ENCODE measurements at regions of chr5 and their contacts with region 1.

Region 1: DNA sequence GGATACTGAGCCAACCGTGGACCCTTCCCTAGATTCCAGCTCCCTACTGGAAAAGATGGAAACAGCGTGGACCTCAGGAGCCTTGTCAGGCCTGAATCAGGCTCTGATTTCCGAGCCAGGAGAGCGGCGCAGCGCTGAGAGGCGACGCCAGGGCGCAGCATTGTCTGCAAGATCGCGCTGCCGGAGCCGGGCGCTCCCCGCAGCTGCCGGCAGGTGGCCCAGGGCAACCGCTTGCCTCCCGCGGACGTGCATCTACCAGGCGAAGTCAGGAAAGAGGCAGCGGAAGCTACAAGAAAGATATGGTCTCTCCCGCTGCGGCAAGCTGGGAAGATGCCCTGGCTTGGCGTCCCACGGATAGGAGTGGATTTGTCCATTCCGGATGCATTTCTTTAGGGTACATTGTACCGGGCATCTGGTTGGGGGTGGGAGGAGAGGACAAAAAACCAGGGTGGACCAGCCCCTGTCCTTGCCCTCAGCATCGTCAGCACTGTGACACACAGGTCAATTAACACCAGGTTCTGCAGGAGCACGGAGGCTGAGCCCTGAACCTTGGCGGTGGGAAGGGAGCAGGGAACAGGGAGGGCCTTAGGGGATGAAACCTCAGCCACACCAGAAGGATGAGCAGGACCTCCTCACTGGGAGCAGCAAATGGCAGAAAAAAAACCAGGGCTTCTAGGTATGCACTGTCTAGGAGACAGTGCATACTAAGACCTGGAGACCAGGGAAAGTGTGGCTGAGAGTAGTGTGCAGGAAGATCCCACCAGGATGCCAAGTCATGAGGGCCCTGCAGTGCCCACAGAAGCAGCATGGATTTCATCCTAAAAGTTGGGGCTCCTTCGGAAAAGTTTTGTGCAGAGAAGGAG is 55.9 kb downstream of the SFXN1 start:
- DNase-seq: peak; percentile 67 to 91 (median 79)
- ATAC-seq: peak; percentile 99
- H3K4me3 ChIP-seq: peak overlapping the region in 1 of 2 experiments; percentile 11
- H3K4me3 Mint-ChIP-seq: peak overlapping the region; percentile 69
- H3K27ac ChIP-seq: no peak overlapping the region
- H3K27ac Mint-ChIP-seq: no peak overlapping the region
- H3K4me1 ChIP-seq: peaks cover 16% of the 10 kb centered on the region
- H3K4me1 Mint-ChIP-seq: peaks cover 27% of the 10 kb centered on the region
- H3K27me3 ChIP-seq: no peaks in the 10 kb centered on the region
- H3K27me3 Mint-ChIP-seq: no peaks in the 10 kb centered on the region
- CTCF ChIP-seq: peak; percentile 100

Region 2: GRCh38 chr5:173736923-173737412 is 1797.3 kb before region 1 on chr5:
- CTCF ChIA-PET with region 1: no interaction called
- POLR2A ChIA-PET with region 1: no interaction called
- intact Hi-C with region 1: no loop called
- DNase-seq: no peak
- ATAC-seq: no peak
- H3K4me3 ChIP-seq: no peak overlapping the region
- H3K4me3 Mint-ChIP-seq: no peak overlapping the region
- H3K27ac ChIP-seq: no peak overlapping the region
- H3K27ac Mint-ChIP-seq: no peak overlapping the region
- H3K4me1 ChIP-seq: no peaks in the 10 kb centered on the region
- H3K4me1 Mint-ChIP-seq: no peaks in the 10 kb centered on the region
- H3K27me3 ChIP-seq: no peaks in the 10 kb centered on the region
- H3K27me3 Mint-ChIP-seq: peaks cover 2% of the 10 kb centered on the region
- CTCF ChIP-seq: no peak

Region 3: GRCh38 chr5:175363300-175363699 is 171.0 kb before region 1 on chr5:
- CTCF ChIA-PET with region 1: no interaction called
- POLR2A ChIA-PET with region 1: no interaction called
- intact Hi-C with region 1: no loop called
- DNase-seq: no peak
- ATAC-seq: no peak
- H3K4me3 ChIP-seq: no peak overlapping the region
- H3K4me3 Mint-ChIP-seq: no peak overlapping the region
- H3K27ac ChIP-seq: no peak overlapping the region
- H3K27ac Mint-ChIP-seq: no peak overlapping the region
- H3K4me1 ChIP-seq: no peaks in the 10 kb centered on the region
- H3K4me1 Mint-ChIP-seq: no peaks in the 10 kb centered on the region
- H3K27me3 ChIP-seq: no peaks in the 10 kb centered on the region
- H3K27me3 Mint-ChIP-seq: peaks cover 26% of the 10 kb centered on the region
- CTCF ChIP-seq: no peak

Region 4: GRCh38 chr5:175427762-175428161 is 106.5 kb before region 1 on chr5:
- CTCF ChIA-PET with region 1: no interaction called
- POLR2A ChIA-PET with region 1: no interaction called
- intact Hi-C with region 1: no loop called
- DNase-seq: no peak
- ATAC-seq: no peak
- H3K4me3 ChIP-seq: no peak overlapping the region
- H3K4me3 Mint-ChIP-seq: no peak overlapping the region
- H3K27ac ChIP-seq: no peak overlapping the region
- H3K27ac Mint-ChIP-seq: no peak overlapping the region
- H3K4me1 ChIP-seq: no peaks in the 10 kb centered on the region
- H3K4me1 Mint-ChIP-seq: no peaks in the 10 kb centered on the region
- H3K27me3 ChIP-seq: no peaks in the 10 kb centered on the region
- H3K27me3 Mint-ChIP-seq: peaks cover 21% of the 10 kb centered on the region
- CTCF ChIP-seq: no peak

Region 5: DNA sequence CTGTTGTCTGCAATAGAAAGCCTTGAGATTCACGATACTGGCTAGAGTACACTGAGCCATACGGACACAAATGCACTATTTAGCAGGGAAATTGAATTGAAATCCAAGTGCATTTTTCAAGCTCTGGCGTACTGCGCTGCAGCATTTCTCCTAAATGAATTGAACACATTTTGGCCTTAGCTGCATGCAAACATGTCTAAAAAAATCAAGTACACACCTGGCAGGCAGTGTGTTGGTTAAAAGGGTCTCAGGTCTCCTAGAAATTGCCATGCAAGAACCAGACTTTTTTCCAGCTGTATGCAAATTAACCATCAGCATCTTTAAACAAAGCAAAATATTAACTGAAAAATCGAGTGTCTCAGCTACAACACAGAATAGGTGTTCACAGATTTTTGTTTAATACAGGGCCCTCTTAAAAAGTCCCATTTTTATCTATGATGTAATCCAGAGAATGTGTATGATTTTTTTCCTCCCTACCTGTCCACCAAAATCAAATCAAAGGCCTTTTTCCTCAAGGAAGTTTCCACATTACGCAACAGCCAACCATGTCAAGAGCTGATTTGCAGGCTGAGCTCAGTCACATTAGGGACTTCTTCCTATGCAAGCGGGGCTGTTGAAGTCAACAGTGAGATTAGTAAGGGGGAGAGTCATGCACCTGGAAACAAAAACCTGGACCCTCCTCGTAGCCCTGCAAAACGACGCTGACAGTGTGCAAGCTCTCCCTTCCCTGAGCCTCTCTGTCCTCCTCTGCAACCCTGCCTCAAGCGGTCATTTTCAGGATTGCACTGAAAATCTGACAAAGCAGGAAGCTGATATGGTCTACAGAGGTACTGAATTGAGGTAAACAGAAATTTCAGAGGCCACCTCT is 70.0 kb before region 1 on chr5:
- CTCF ChIA-PET with region 1: interaction called, 42 read pairs
- POLR2A ChIA-PET with region 1: interaction called, 4 read pairs
- intact Hi-C with region 1: no loop called
- DNase-seq: peak; percentile 35 to 76 (median 63)
- ATAC-seq: peak; percentile 98
- H3K4me3 ChIP-seq: no peak overlapping the region
- H3K4me3 Mint-ChIP-seq: peak overlapping the region; percentile 5
- H3K27ac ChIP-seq: no peak overlapping the region
- H3K27ac Mint-ChIP-seq: peak overlapping the region; percentile 62
- H3K4me1 ChIP-seq: peaks cover 7% of the 10 kb centered on the region
- H3K4me1 Mint-ChIP-seq: peaks cover 10% of the 10 kb centered on the region
- H3K27me3 ChIP-seq: no peaks in the 10 kb centered on the region
- H3K27me3 Mint-ChIP-seq: no peaks in the 10 kb centered on the region
- CTCF ChIP-seq: peak; percentile 78

Region 6: GRCh38 chr5:175517818-175518450 is 16.4 kb before region 1 on chr5:
- CTCF ChIA-PET with region 1: interaction called, 74 read pairs
- POLR2A ChIA-PET with region 1: no interaction called
- intact Hi-C with region 1: no loop called
- DNase-seq: peak in 8 of 9 experiments; percentile 32 to 70 (median 51)
- ATAC-seq: peak; percentile 13
- H3K4me3 ChIP-seq: no peak overlapping the region
- H3K4me3 Mint-ChIP-seq: peak overlapping the region; percentile 35
- H3K27ac ChIP-seq: peak overlapping the region in 1 of 2 experiments; percentile 5
- H3K27ac Mint-ChIP-seq: peak overlapping the region; percentile 87
- H3K4me1 ChIP-seq: peaks cover 66% of the 10 kb centered on the region
- H3K4me1 Mint-ChIP-seq: peaks cover 75% of the 10 kb centered on the region
- H3K27me3 ChIP-seq: no peaks in the 10 kb centered on the region
- H3K27me3 Mint-ChIP-seq: no peaks in the 10 kb centered on the region
- CTCF ChIP-seq: no peak

Region 7: GRCh38 chr5:175657593-175658271 is 123.4 kb after region 1 on chr5 and contains the start of gene HRH2:
- CTCF ChIA-PET with region 1: interaction called, 36 read pairs
- POLR2A ChIA-PET with region 1: interaction called, 4 read pairs
- intact Hi-C with region 1: loop called (anchors 1 to 2 kb)
- DNase-seq: peak in 7 of 9 experiments; percentile 28 to 61 (median 49)
- ATAC-seq: peak; percentile 43
- H3K4me3 ChIP-seq: peak within 1 kb of the TSS; percentile 63 to 84
- H3K4me3 Mint-ChIP-seq: peak within 1 kb of the TSS; percentile 93
- H3K27ac ChIP-seq: peak within 1 kb of the TSS in 1 of 2 experiments; percentile 31
- H3K27ac Mint-ChIP-seq: peak within 1 kb of the TSS; percentile 76
- H3K4me1 ChIP-seq: peaks cover 68% of the 10 kb centered on the region
- H3K4me1 Mint-ChIP-seq: peaks cover 80% of the 10 kb centered on the region
- H3K27me3 ChIP-seq: peaks cover 0 to 7% of the 10 kb centered on the region in 2 experiments
- H3K27me3 Mint-ChIP-seq: no peaks in the 10 kb centered on the region
- CTCF ChIP-seq: no peak
- total RNA-seq, gene HRH2: 1.4 to 1.6 TPM

Region 8: DNA sequence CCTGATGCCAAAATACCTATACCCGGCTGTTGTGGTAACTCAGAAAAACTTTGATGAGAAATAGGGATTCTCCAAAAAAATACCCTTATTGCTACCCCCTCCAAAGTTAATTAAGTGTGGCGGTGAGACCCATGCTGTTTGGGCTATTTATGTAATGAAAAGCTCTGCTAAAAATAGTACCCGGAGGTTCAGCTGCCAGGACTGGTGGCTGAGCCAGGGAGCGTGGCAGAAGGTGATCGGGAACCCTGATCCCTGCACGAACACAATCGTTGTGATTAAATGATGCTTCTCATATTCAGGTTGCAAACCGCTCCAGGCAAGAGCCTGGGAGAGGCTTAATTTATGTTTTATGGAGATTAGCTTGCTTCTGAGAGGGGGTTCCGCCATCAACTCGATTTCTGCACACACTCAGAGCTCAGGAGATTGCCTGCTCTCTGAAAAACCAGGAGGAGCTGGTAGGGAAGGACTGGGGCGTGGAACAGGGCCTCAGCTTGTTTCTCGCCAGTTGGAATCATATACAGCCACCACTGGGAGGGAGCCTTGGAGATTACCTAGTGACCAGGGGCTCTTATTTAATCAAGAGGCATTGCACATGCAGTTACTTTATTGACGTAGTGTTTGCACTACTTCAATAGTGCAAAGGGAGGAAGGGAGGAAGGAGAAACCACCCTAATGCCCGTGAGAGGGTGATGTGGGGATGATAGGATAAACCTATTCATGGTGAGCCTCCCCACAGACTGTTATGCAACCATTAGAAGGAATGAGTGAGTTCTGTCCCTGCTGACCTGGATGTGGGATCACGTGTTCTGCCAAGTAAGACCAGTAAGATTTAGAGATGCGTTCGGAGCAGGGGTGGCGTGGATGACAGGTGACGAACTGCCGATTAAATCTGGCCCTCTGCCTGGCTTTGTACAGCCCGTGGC is 147.0 kb after region 1 on chr5:
- CTCF ChIA-PET with region 1: interaction called, 14 read pairs
- POLR2A ChIA-PET with region 1: no interaction called
- intact Hi-C with region 1: no loop called
- DNase-seq: no peak
- ATAC-seq: no peak
- H3K4me3 ChIP-seq: no peak overlapping the region
- H3K4me3 Mint-ChIP-seq: no peak overlapping the region
- H3K27ac ChIP-seq: no peak overlapping the region
- H3K27ac Mint-ChIP-seq: no peak overlapping the region
- H3K4me1 ChIP-seq: peaks cover 21% of the 10 kb centered on the region
- H3K4me1 Mint-ChIP-seq: peaks cover 36% of the 10 kb centered on the region
- H3K27me3 ChIP-seq: no peaks in the 10 kb centered on the region
- H3K27me3 Mint-ChIP-seq: no peaks in the 10 kb centered on the region
- CTCF ChIP-seq: no peak

Region 9: DNA sequence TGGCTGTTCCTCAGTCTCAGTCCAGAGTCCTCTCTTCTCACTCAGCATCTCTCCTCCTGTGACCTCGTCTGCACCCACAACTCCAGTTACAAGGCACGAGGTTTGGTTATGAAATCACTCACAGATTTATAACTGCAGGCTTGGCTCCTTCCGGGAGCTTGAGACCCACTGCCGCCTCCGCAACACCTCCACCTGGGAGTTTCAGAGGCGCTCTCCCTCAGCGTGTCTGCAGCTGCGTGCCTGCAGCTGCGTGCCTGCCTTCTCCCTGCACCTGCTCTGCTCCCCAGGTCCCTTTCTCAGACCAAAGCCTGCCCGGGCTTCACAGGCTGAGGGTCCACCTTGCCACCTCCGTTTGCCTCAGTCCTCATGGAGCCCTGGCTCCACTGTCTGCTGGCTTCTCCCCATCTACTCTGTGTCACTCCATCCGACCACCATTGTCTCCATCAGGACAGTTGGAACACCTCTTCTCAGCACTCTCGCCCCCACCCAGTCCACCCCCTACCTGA is 175.0 kb after region 1 on chr5:
- CTCF ChIA-PET with region 1: interaction called, 73 read pairs
- POLR2A ChIA-PET with region 1: no interaction called
- intact Hi-C with region 1: no loop called
- DNase-seq: no peak
- ATAC-seq: no peak
- H3K4me3 ChIP-seq: no peak overlapping the region
- H3K4me3 Mint-ChIP-seq: no peak overlapping the region
- H3K27ac ChIP-seq: no peak overlapping the region
- H3K27ac Mint-ChIP-seq: no peak overlapping the region
- H3K4me1 ChIP-seq: no peaks in the 10 kb centered on the region
- H3K4me1 Mint-ChIP-seq: no peaks in the 10 kb centered on the region
- H3K27me3 ChIP-seq: no peaks in the 10 kb centered on the region
- H3K27me3 Mint-ChIP-seq: no peaks in the 10 kb centered on the region
- CTCF ChIP-seq: no peak

Region 10: DNA sequence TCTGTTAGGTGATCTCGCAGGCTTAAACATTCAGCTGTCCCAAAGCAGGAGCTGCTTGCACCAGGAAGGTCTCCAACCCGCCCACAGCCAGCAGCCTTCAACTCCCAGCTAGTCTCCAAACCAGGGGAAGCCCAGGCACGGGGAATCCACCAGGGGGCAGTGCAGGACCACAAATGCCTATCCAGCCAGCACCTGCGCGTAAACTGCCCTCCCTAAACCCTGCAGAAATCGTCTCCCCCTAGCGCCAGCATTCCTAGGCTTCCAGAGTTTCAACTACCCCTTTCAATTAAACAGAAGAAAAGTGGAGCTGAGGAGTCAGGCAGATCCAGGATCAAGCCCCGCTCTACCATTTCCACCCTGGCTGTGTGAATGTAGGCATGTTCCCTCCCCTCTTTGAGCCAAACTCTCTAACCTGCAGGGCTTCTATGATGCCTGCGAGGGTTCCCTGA is 195.6 kb after region 1 on chr5:
- CTCF ChIA-PET with region 1: interaction called, 55 read pairs
- POLR2A ChIA-PET with region 1: interaction called, 4 read pairs
- intact Hi-C with region 1: no loop called
- DNase-seq: peak; percentile 86 to 97 (median 89)
- ATAC-seq: peak; percentile 86
- H3K4me3 ChIP-seq: no peak overlapping the region
- H3K4me3 Mint-ChIP-seq: no peak overlapping the region
- H3K27ac ChIP-seq: no peak overlapping the region
- H3K27ac Mint-ChIP-seq: no peak overlapping the region
- H3K4me1 ChIP-seq: peaks cover 7% of the 10 kb centered on the region
- H3K4me1 Mint-ChIP-seq: peaks cover 8% of the 10 kb centered on the region
- H3K27me3 ChIP-seq: peaks cover 2 to 6% of the 10 kb centered on the region in 2 experiments
- H3K27me3 Mint-ChIP-seq: peaks cover 26% of the 10 kb centered on the region
- CTCF ChIP-seq: peak; percentile 91

Region 11: DNA sequence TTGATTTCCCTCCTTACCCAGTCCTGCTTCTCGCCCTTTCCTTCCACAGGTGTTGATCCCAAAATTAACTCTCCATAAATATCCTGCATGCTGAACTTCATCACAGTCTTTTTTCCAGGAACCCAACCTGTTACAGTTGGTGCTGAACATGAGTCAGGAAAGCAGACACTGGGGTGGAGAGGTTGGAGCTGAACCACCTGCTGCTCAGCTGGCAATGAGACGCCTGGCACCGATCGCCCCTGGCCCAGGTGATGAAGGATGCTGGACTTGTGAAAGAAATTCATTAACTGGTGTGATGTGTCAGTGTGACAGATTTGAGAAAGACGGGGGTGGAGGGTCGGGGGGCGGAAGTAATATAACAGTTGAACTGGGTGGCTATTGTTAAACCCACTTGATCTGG is 367.7 kb after region 1 on chr5:
- CTCF ChIA-PET with region 1: no interaction called
- POLR2A ChIA-PET with region 1: no interaction called
- intact Hi-C with region 1: no loop called
- DNase-seq: no peak
- ATAC-seq: no peak
- H3K4me3 ChIP-seq: no peak overlapping the region
- H3K4me3 Mint-ChIP-seq: no peak overlapping the region
- H3K27ac ChIP-seq: no peak overlapping the region
- H3K27ac Mint-ChIP-seq: no peak overlapping the region
- H3K4me1 ChIP-seq: no peaks in the 10 kb centered on the region
- H3K4me1 Mint-ChIP-seq: peaks cover 3% of the 10 kb centered on the region
- H3K27me3 ChIP-seq: no peaks in the 10 kb centered on the region
- H3K27me3 Mint-ChIP-seq: no peaks in the 10 kb centered on the region
- CTCF ChIP-seq: no peak